ENCODE measurements at regions of chr3 and their contacts with region 1.

Region 1: GRCh38 chr3:15268033-15268631 is 62.1 kb downstream of the CAPN7 start:
- DNase-seq: peak; percentile 94
- H3K4me3 ChIP-seq: no peak overlapping the region
- H3K27ac ChIP-seq: peak overlapping the region; percentile 56 to 73 (median 64)
- H3K4me1 ChIP-seq: peaks cover 0 to 31% (median 21%) of the 10 kb centered on the region in 4 donors
- H3K27me3 ChIP-seq: no peaks in the 10 kb centered on the region
- CTCF ChIP-seq: peak; percentile 78 to 93 (median 88)
- EP300 ChIP-seq: no peak
- POLR2A ChIP-seq: no peak

Region 2: GRCh38 chr3:15377961-15378791 is 110.0 kb after region 1 on chr3:
- intact Hi-C with region 1: loop called (anchors 2 kb)
- DNase-seq: peak; percentile 97
- H3K4me3 ChIP-seq: no peak overlapping the region
- H3K27ac ChIP-seq: peak overlapping the region; percentile 43 to 68 (median 50)
- H3K4me1 ChIP-seq: peaks cover 0 to 5% (median 0%) of the 10 kb centered on the region in 4 donors
- H3K27me3 ChIP-seq: no peaks in the 10 kb centered on the region
- CTCF ChIP-seq: peak; percentile 61 to 87 (median 70)
- EP300 ChIP-seq: peak in 3 of 4 donors; percentile 34 to 76 (median 70)
- POLR2A ChIP-seq: no peak

Region 3: GRCh38 chr3:15405448-15406050 is 137.4 kb after region 1 on chr3:
- intact Hi-C with region 1: loop called (anchors 1 kb)
- DNase-seq: no peak
- H3K4me3 ChIP-seq: no peak overlapping the region
- H3K27ac ChIP-seq: no peak overlapping the region
- H3K4me1 ChIP-seq: no peaks in the 10 kb centered on the region
- H3K27me3 ChIP-seq: no peaks in the 10 kb centered on the region
- CTCF ChIP-seq: peak in 3 of 4 experiments; percentile 30 to 55 (median 33)
- EP300 ChIP-seq: no peak
- POLR2A ChIP-seq: no peak

Region 4: DNA sequence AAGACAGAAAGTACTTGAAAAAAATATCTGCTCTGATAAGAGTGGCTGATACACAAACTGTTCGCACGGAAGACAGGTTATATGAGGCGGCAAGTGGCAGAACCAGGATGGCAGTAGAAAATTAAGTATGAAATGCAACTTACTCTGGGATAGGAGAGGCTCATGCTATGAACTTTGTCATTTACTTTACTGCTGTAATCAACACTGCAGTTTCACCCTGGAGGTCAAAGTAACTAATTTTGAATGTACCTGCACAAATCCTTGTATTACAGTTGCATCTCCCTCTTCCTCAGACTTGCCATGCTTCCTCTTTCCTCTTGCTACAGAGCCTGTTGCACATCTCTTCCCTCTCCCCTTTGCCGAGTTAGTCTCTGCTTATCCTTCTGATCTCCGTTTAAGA is 294.4 kb after region 1 on chr3:
- intact Hi-C with region 1: loop called (anchors 10 kb)
- DNase-seq: no peak
- H3K4me3 ChIP-seq: no peak overlapping the region
- H3K27ac ChIP-seq: no peak overlapping the region
- H3K4me1 ChIP-seq: no peaks in the 10 kb centered on the region
- H3K27me3 ChIP-seq: no peaks in the 10 kb centered on the region
- CTCF ChIP-seq: no peak
- EP300 ChIP-seq: no peak
- POLR2A ChIP-seq: no peak